ENCODE measurements at regions of chr22 and their contacts with region 1.

Region 1: GRCh38 chr22:17920145-17920605 is 104.2 kb downstream of the MICAL3 start:
- DNase-seq: peak; percentile 77 to 93 (median 84)
- ATAC-seq: peak; percentile 83 to 91 (median 88)
- H3K4me3 ChIP-seq: peak overlapping the region in 10 of 12 donors; percentile 18 to 37 (median 32)
- H3K27ac ChIP-seq: peak overlapping the region; percentile 66 to 96 (median 88)
- H3K4me1 ChIP-seq: peaks cover 4 to 98% (median 62%) of the 10 kb centered on the region in 12 donors
- H3K27me3 ChIP-seq: no peaks in the 10 kb centered on the region
- CTCF ChIP-seq: peak in 3 of 12 donors; percentile 17 to 31 (median 28)
- POLR2A ChIP-seq: no peak

Region 2: GRCh38 chr22:17938484-17938924 is 18.3 kb after region 1 on chr22:
- intact Hi-C with region 1: loop called in 1 of 10 experiments (anchors 2 kb)
- DNase-seq: peak in 2 of 5 donors; percentile 44 to 54
- ATAC-seq: peak; percentile 28 to 76 (median 71)
- H3K4me3 ChIP-seq: no peak overlapping the region
- H3K27ac ChIP-seq: peak overlapping the region; percentile 22 to 93 (median 72)
- H3K4me1 ChIP-seq: peaks cover 0 to 60% (median 38%) of the 10 kb centered on the region in 12 donors
- H3K27me3 ChIP-seq: no peaks in the 10 kb centered on the region
- CTCF ChIP-seq: no peak
- POLR2A ChIP-seq: no peak

Region 3: GRCh38 chr22:18001040-18001893 is 81.1 kb after region 1 on chr22:
- intact Hi-C with region 1: loop called in 2 of 10 experiments (anchors 5 to 10 kb)
- DNase-seq: peak; percentile 91 to 94 (median 92)
- ATAC-seq: peak; percentile 96 to 98 (median 97)
- H3K4me3 ChIP-seq: peak overlapping the region; percentile 65 to 99 (median 84)
- H3K27ac ChIP-seq: peak overlapping the region; percentile 86 to 98 (median 95)
- H3K4me1 ChIP-seq: peaks cover 0 to 37% (median 18%) of the 10 kb centered on the region in 12 donors
- H3K27me3 ChIP-seq: peaks cover 0 to 3% (median 0%) of the 10 kb centered on the region in 9 donors
- CTCF ChIP-seq: peak in 11 of 12 donors; percentile 19 to 67 (median 49)
- POLR2A ChIP-seq: peak in 1 of 2 donors; percentile 86